ENCODE measurements at regions of chr4 and their contacts with region 1.

Region 1: DNA sequence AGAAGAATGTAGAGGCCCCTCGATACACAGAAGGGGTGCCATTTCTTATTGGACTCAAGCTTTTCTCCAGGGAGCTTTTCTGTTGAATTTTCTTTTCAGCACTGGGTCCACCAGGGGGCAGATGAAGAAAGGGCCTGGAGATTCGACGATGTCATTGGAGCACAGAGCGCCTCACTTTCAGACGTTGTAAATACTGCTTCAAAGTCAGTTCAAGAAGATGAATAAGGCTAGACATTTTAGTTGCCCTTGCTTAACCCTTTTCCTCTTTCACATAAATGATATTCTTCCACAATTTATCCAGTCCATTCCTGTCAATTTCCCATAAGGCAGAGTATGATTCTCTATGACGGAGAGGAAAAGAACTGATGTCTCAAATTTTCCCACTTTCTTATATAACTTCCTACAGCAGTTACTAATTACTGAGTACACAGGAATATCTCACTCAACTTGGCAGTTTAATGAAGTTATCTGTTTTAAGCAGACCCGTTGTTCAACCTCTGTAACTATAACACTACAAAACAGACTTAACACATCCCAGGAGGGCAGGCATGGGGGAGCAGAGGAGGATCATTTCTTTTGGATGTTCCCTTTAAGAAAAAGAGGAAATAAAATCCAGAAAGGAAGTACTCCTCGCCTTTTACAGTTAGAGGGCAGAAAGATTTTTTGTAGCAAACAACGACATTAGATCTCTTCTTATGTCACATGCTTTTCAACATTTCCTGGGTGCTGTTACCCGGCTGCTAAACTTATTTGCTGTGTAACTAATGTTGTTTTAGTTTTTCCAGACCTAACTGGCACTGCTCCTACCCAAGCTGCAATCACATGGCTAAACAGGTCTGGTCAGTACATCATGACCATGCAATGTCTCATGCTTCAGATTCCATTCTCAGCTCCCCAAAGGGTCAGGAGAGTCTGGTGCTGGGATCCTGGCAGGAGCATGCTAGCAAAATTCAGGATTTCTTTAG is 12.2 kb upstream of the CENPU start:
- DNase-seq: peak; percentile 84
- H3K4me3 ChIP-seq: no peak overlapping the region
- H3K27ac ChIP-seq: peak overlapping the region; percentile 64
- H3K4me1 ChIP-seq: peaks cover 34% of the 10 kb centered on the region
- H3K27me3 ChIP-seq: no peaks in the 10 kb centered on the region
- CTCF ChIP-seq: peak; percentile 72 to 84

Region 2: DNA sequence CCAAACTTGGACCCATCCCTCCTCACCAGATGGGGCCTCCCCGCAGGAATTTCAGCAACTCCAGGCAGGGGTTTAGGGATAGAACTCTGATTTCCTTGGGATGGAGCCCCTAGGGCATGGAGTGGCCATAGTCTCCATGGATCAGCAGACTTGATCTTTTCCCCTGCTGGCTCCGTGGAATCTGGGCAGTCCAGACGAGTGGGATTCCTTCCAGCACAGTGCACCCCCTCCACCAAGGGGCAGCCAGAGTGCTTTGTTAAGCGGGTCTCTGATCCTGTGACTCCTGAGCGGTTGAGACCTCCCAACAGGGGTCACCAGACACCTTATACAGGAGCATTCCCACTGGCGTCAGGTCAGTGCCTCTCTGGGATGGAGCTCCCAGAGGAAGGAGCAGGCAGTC is 568.8 kb before region 1 on chr4:
- CTCF ChIA-PET with region 1: no interaction called
- dilution Hi-C with region 1: no loop called
- in situ Hi-C with region 1: no loop called
- intact Hi-C with region 1: no loop called
- DNase-seq: no peak
- H3K4me3 ChIP-seq: no peak overlapping the region
- H3K27ac ChIP-seq: no peak overlapping the region
- H3K4me1 ChIP-seq: no peaks in the 10 kb centered on the region
- H3K27me3 ChIP-seq: no peaks in the 10 kb centered on the region
- CTCF ChIP-seq: no peak

Region 3: GRCh38 chr4:184805462-184806228 is 59.5 kb after region 1 on chr4:
- CTCF ChIA-PET with region 1: no interaction called
- dilution Hi-C with region 1: loop called (anchors 5 kb)
- in situ Hi-C with region 1: no loop called
- intact Hi-C with region 1: no loop called
- DNase-seq: no peak
- H3K4me3 ChIP-seq: no peak overlapping the region
- H3K27ac ChIP-seq: no peak overlapping the region
- H3K4me1 ChIP-seq: peaks cover 44% of the 10 kb centered on the region
- H3K27me3 ChIP-seq: no peaks in the 10 kb centered on the region
- CTCF ChIP-seq: no peak

Region 4: DNA sequence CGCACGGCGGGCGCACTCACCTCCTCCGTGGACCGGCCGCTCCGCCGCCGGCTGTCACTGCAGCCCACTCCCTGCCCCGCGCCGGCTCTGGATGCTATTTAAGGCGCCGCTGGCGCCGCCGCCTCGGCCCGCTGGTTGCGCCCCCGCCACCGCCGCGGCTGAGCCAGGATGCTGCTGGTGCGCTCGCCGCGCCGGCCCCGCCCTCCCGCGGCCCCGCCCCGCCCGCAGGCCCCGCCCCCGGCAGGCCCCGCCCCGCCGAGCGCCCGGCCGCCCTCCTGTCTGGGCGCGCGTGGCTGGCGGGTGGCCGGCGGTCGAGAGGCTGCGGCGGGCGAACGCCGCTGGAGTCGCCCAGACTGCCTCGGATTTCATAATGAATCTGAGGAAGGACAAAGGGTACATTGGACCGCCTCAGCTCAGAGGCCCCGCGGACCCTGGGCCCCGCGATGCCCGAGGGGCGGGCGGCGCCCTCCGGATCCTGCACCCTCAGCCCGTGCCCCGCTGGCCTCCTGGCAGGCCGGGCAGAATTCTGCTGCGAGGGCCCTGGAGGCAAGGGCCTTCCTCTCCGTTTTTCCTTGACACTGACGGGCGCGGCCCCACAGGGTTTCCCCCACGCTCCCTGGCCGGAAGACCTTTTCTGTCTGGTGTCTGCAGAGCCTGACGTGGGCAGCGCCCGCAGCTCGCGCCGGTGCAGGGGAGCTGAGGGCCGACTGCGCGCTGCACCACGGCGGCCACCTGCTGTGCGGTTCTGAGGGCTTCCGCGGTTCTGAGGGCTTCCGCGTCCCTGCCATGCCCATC is 80.0 kb after region 1 on chr4 and contains the start of gene ACSL1:
- CTCF ChIA-PET with region 1: no interaction called
- dilution Hi-C with region 1: no loop called
- in situ Hi-C with region 1: no loop called
- intact Hi-C with region 1: loop called (anchors 1 kb)
- DNase-seq: peak; percentile 56
- H3K4me3 ChIP-seq: peak within 1 kb of the TSS; percentile 53 to 75 (median 75)
- H3K27ac ChIP-seq: peak within 1 kb of the TSS; percentile 55
- H3K4me1 ChIP-seq: peaks cover 15% of the 10 kb centered on the region
- H3K27me3 ChIP-seq: no peaks in the 10 kb centered on the region
- CTCF ChIP-seq: peak in 1 of 2 donors; percentile 5
- total RNA-seq, gene ACSL1: 28.9 to 126 TPM

Region 5: GRCh38 chr4:184937745-184938144 is 191.6 kb after region 1 on chr4:
- CTCF ChIA-PET with region 1: no interaction called
- dilution Hi-C with region 1: no loop called
- in situ Hi-C with region 1: no loop called
- intact Hi-C with region 1: no loop called
- DNase-seq: no peak
- H3K4me3 ChIP-seq: no peak overlapping the region
- H3K27ac ChIP-seq: no peak overlapping the region
- H3K4me1 ChIP-seq: no peaks in the 10 kb centered on the region
- H3K27me3 ChIP-seq: no peaks in the 10 kb centered on the region
- CTCF ChIP-seq: no peak

Region 6: GRCh38 chr4:184983672-184984356 is 237.7 kb after region 1 on chr4:
- CTCF ChIA-PET with region 1: interaction called, 6 read pairs
- dilution Hi-C with region 1: loop called (anchors 5 kb)
- in situ Hi-C with region 1: no loop called
- intact Hi-C with region 1: loop called (anchors 1 kb)
- DNase-seq: peak; percentile 59
- H3K4me3 ChIP-seq: no peak overlapping the region
- H3K27ac ChIP-seq: no peak overlapping the region
- H3K4me1 ChIP-seq: no peaks in the 10 kb centered on the region
- H3K27me3 ChIP-seq: peaks cover 2% of the 10 kb centered on the region
- CTCF ChIP-seq: peak; percentile 32 to 70

Region 7: DNA sequence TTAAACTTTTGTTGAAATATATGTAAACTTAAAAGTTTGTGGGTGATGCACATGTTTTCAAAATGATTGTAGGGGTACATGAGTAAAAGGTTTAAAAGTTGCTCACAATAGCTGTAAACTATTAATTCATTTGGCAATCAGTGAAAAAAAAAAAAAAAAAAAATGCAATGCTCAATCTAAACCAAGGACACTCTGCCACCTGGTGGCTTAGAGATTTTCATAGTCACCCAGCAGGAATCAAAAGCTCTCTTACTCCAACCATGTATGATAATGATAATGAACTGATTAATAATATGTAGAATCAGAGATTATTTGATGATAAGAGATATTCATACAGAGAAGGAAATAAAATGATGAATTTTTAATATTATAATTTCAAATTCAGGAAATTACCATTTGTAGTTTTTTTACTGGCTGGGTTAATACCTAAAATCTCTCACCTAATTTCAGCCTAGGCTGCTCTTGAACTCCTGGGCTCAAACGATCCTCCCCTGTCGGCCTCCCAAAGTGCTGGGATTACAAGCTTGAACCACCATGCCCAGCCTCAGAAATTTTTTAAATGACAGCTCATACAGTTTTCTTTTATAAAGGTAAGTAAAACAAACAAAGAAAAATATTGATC is 350.0 kb after region 1 on chr4:
- CTCF ChIA-PET with region 1: interaction called, 3 read pairs
- dilution Hi-C with region 1: no loop called
- in situ Hi-C with region 1: no loop called
- intact Hi-C with region 1: loop called (anchors 1 kb)
- DNase-seq: peak; percentile 16
- H3K4me3 ChIP-seq: no peak overlapping the region
- H3K27ac ChIP-seq: no peak overlapping the region
- H3K4me1 ChIP-seq: no peaks in the 10 kb centered on the region
- H3K27me3 ChIP-seq: no peaks in the 10 kb centered on the region
- CTCF ChIP-seq: peak; percentile 41 to 62

Region 8: GRCh38 chr4:185369731-185370130 is 623.6 kb after region 1 on chr4:
- CTCF ChIA-PET with region 1: no interaction called
- dilution Hi-C with region 1: no loop called
- in situ Hi-C with region 1: no loop called
- intact Hi-C with region 1: no loop called
- DNase-seq: no peak
- H3K4me3 ChIP-seq: no peak overlapping the region
- H3K27ac ChIP-seq: no peak overlapping the region
- H3K4me1 ChIP-seq: no peaks in the 10 kb centered on the region
- H3K27me3 ChIP-seq: no peaks in the 10 kb centered on the region
- CTCF ChIP-seq: no peak

Measured in mammary epithelial cell (primary cell).